Adrenal gland (tissue), 19 donors: ENCODE measurements at regions of chr11 and their contacts with region 1.

Region 1: DNA sequence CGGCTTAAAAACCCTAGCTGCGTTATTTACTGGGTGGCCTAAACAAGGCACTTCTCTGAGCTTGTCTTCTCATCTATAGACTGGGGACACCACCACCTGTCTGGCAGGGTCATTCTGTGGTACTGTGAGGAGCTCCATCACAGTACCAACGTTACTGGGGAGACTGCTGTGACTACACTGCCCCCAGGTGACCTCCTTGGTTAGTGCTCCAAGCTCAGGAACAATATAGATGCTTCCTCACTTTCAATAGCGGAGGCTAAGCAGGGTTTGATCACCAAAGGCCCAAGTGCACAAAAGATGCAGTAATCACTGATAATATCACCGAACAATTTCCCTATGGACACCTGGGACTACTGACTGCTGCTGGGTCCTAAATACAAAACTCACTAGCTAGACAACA is 18.8 kb downstream of the PRPF19 start:
- DNase-seq: peak; percentile 45 to 78 (median 60)
- H3K4me3 ChIP-seq: no peak overlapping the region
- H3K27ac ChIP-seq: no peak overlapping the region
- H3K4me1 ChIP-seq: peaks cover 0 to 4% of the 10 kb centered on the region in 2 donors
- H3K27me3 ChIP-seq: no peaks in the 10 kb centered on the region
- CTCF ChIP-seq: peak; percentile 26 to 68 (median 53)
- POLR2A ChIP-seq: no peak

Region 2: GRCh38 chr11:60775420-60775961 is 112.1 kb before region 1 on chr11:
- intact Hi-C with region 1: loop called in 1 of 2 experiments (anchors 5 kb)
- DNase-seq: peak; percentile 84 to 95 (median 91)
- H3K4me3 ChIP-seq: no peak overlapping the region
- H3K27ac ChIP-seq: no peak overlapping the region
- H3K4me1 ChIP-seq: no peaks in the 10 kb centered on the region
- H3K27me3 ChIP-seq: no peaks in the 10 kb centered on the region
- CTCF ChIP-seq: peak; percentile 81 to 90 (median 87)
- POLR2A ChIP-seq: no peak

Region 3: GRCh38 chr11:61071208-61071681 is 183.7 kb after region 1 on chr11:
- intact Hi-C with region 1: no loop called
- DNase-seq: no peak
- H3K4me3 ChIP-seq: no peak overlapping the region
- H3K27ac ChIP-seq: no peak overlapping the region
- H3K4me1 ChIP-seq: no peaks in the 10 kb centered on the region
- H3K27me3 ChIP-seq: no peaks in the 10 kb centered on the region
- CTCF ChIP-seq: no peak
- POLR2A ChIP-seq: no peak